ENCODE measurements at regions of chr3 and their contacts with region 1.

Region 1: DNA sequence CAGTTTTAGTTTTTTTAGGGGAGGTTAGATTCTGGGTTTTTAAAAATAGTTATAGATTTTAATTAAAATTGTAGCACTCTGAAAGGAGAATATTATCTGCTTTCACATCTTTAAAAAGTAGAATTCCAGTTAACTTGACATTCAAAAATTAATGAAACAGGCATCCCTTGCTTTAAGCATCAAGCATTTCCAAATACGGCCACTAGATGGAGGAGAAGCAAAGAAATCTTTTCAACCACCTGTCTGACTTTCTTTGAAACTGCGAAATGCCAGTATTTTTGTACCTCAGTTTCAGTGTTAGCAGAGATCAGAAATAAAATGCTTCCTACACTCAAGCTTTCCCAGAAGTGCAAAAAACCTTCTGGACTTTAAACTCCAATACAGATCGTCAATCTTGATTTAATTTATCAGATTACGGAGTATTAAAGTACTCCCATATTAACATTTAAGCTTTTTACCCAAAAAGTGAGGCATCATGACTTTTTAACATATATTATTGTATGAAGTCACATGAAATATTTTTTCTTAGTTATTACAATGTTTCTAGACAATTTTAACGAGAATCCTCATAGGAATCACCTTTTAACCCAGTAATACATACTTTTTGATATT is 153.3 kb downstream of the P3H2 start:
- DNase-seq: no peak
- ATAC-seq: no peak
- H3K4me3 ChIP-seq: no peak overlapping the region
- H3K27ac ChIP-seq: no peak overlapping the region
- H3K4me1 ChIP-seq: peaks cover 0 to under 1% (median 0%) of the 10 kb centered on the region in 12 donors
- H3K27me3 ChIP-seq: no peaks in the 10 kb centered on the region
- CTCF ChIP-seq: peak; percentile 81 to 89 (median 84)
- POLR2A ChIP-seq: no peak

Region 2: DNA sequence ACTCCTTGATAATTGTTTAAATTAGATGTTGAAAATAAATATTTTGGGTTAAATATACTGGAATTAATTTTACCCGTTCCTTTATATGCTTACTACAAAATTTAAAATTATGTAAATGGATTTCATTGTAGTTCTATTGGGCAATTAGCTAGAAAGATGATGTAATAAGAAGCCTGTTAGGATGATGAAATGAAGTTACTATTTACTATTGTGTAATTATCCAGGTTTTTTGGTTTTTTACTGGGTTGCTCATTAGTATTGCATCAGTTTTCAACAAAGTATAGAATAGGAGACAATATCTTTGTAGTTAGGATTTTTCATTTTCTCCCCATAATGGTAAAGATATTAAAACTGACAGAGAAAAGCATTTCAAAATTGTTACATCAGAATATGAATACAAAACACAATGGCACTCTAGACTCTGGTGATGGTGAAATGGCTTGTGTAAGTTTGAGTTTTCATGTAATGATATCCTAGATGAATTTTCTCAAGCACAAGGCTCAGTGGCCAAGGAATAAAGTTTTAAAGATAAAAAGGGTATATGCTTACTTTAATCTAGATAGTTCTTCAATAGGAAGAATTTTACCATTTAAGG is 68.7 kb before region 1 on chr3:
- intact Hi-C with region 1: no loop called
- DNase-seq: no peak
- ATAC-seq: no peak
- H3K4me3 ChIP-seq: no peak overlapping the region
- H3K27ac ChIP-seq: no peak overlapping the region
- H3K4me1 ChIP-seq: no peaks in the 10 kb centered on the region
- H3K27me3 ChIP-seq: no peaks in the 10 kb centered on the region
- CTCF ChIP-seq: no peak
- POLR2A ChIP-seq: no peak

Region 3: DNA sequence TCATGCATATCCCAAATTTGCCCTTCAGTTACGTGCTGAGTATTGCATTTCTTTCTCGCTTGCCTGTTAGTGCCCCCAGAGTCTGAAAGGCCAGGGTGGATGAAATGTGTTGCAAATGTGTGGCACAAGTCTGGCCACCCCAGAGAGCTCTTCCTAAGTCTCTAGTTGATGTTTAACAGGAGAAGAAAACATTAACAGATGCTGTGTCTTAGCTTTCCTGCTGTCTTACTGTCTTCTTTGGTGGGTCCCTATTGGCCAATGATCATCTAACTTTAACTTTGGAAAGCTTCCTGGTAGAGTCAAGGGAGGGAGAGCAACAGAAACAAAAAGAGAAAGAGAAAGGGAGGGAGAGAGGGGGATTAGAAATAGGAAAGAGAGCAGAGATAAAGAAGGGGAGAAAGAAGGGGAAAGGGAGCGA is 230.0 kb after region 1 on chr3:
- intact Hi-C with region 1: loop called in 7 of 10 experiments (anchors 1 to 5 kb)
- DNase-seq: no peak
- ATAC-seq: no peak
- H3K4me3 ChIP-seq: no peak overlapping the region
- H3K27ac ChIP-seq: no peak overlapping the region
- H3K4me1 ChIP-seq: peaks cover 0 to 2% (median 0%) of the 10 kb centered on the region in 12 donors
- H3K27me3 ChIP-seq: no peaks in the 10 kb centered on the region
- CTCF ChIP-seq: no peak
- POLR2A ChIP-seq: no peak

Region 4: GRCh38 chr3:190205739-190206138 is 238.4 kb after region 1 on chr3:
- intact Hi-C with region 1: loop called in 8 of 10 experiments (anchors 1 to 5 kb)
- DNase-seq: no peak
- ATAC-seq: no peak
- H3K4me3 ChIP-seq: no peak overlapping the region
- H3K27ac ChIP-seq: no peak overlapping the region
- H3K4me1 ChIP-seq: peaks cover 0 to 2% (median 0%) of the 10 kb centered on the region in 12 donors
- H3K27me3 ChIP-seq: no peaks in the 10 kb centered on the region
- CTCF ChIP-seq: no peak
- POLR2A ChIP-seq: no peak

Region 5: DNA sequence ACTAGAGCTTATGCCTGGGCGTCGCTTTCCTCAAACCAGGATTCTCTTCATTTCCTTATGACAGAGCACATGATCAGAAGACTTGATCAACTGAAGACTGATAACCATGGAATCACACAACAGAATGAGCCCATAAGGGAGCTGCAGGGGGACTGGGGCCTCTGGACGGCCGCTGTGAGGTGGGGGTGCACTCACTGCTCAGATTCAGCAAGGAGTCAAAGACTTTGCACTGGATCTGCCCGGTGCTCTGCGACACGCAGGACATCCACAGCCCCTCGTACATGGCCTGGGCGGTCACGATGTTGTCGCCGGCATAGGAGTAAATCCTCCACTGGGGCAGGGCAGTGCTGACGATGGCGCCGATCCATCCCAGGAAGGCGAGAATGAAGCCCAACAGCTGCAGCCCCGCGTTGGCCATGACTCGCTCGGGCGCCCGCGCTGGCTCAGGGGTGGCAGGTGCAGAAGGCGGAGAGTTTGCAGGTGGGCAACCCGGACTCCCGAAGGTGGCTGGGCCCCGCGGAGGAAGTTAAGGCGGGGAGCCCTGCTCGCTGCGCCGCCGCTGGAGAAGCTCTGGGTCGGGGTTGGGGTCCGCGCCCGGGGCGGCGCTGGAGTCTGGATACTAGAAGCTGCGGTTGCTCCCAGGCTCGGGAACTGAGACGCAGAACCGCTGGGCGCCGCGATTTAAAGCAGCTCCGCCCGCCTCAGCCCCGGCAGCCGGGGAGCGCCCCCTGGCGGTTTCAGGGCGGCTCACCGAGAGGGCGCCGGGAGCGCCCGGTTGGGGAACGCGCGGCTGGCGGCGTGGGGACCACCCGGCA is 354.6 kb after region 1 on chr3 and contains the start of gene CLDN1:
- intact Hi-C with region 1: loop called in 9 of 10 experiments (anchors 2 to 5 kb)
- DNase-seq: peak; percentile 76 to 89 (median 79)
- ATAC-seq: peak; percentile 72 to 96 (median 92)
- H3K4me3 ChIP-seq: peak within 1 kb of the TSS; percentile 30 to 72 (median 60)
- H3K27ac ChIP-seq: no peak within 1 kb of the TSS
- H3K4me1 ChIP-seq: peaks cover 0 to 18% (median 13%) of the 10 kb centered on the region in 12 donors
- H3K27me3 ChIP-seq: peaks cover 0 to 25% (median 0%) of the 10 kb centered on the region in 9 donors
- CTCF ChIP-seq: peak; percentile 93 to 99 (median 96)
- POLR2A ChIP-seq: no peak
- total RNA-seq, gene CLDN1: 0.13 to 45.0 (median 0.31) TPM in 6 of 9 donors, not detected in the others

Region 6: DNA sequence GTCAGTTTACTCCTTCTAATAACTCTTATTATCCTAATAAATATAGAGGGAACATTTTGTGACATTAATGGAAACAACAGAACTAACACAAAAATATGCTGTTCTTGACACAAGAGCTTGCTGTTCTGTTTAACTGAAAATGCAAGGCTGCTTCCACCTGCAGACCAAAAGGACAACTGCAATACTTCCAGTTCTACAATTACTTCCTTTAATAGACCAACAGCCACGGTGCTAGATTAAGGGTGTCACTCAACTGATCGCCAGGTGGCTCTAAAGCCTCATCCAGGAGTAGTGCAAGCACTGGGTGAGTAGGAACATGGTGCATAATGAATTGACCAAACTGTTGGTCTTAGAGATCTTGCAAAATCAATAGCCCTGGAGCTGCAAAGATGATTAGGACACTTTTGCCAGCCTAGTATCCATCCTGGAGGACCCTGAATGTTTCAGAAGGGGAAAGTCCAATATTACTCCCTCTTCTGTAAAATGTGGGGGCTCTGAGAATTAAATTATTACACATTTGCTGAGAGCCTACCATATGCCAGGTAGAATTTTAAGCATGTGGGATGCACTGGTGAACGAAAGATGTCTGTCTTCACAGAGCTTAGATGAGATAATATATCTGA is 417.0 kb after region 1 on chr3:
- intact Hi-C with region 1: loop called in 1 of 10 experiments (anchors 2 kb)
- DNase-seq: peak in 4 of 5 donors; percentile 13 to 28 (median 25)
- ATAC-seq: peak in 3 of 4 donors; percentile 81 to 90 (median 89)
- H3K4me3 ChIP-seq: no peak overlapping the region
- H3K27ac ChIP-seq: no peak overlapping the region
- H3K4me1 ChIP-seq: no peaks in the 10 kb centered on the region
- H3K27me3 ChIP-seq: no peaks in the 10 kb centered on the region
- CTCF ChIP-seq: peak; percentile 29 to 66 (median 51)
- POLR2A ChIP-seq: no peak